A673 (cell line): ENCODE measurements at regions of chr19 and their contacts with region 1.

Region 1: GRCh38 chr19:5445071-5446062 is 9.8 kb upstream of the ZNRF4 start:
- DNase-seq: peak; percentile 51
- H3K4me3 ChIP-seq: no peak overlapping the region
- H3K27ac ChIP-seq: no peak overlapping the region
- H3K4me1 ChIP-seq: no peaks in the 10 kb centered on the region
- H3K27me3 ChIP-seq: no peaks in the 10 kb centered on the region
- CTCF ChIP-seq: no peak

Region 2: GRCh38 chr19:5425260-5425659 is 20.1 kb before region 1 on chr19:
- CTCF ChIA-PET with region 1: interaction called, 11 read pairs
- POLR2A ChIA-PET with region 1: no interaction called
- intact Hi-C with region 1: no loop called
- DNase-seq: no peak
- H3K4me3 ChIP-seq: no peak overlapping the region
- H3K27ac ChIP-seq: no peak overlapping the region
- H3K4me1 ChIP-seq: no peaks in the 10 kb centered on the region
- H3K27me3 ChIP-seq: no peaks in the 10 kb centered on the region
- CTCF ChIP-seq: no peak

Region 3: GRCh38 chr19:5492635-5493409 is 47.5 kb after region 1 on chr19:
- CTCF ChIA-PET with region 1: no interaction called
- POLR2A ChIA-PET with region 1: no interaction called
- intact Hi-C with region 1: no loop called
- DNase-seq: no peak
- H3K4me3 ChIP-seq: no peak overlapping the region
- H3K27ac ChIP-seq: no peak overlapping the region
- H3K4me1 ChIP-seq: no peaks in the 10 kb centered on the region
- H3K27me3 ChIP-seq: no peaks in the 10 kb centered on the region
- CTCF ChIP-seq: no peak

Region 4: DNA sequence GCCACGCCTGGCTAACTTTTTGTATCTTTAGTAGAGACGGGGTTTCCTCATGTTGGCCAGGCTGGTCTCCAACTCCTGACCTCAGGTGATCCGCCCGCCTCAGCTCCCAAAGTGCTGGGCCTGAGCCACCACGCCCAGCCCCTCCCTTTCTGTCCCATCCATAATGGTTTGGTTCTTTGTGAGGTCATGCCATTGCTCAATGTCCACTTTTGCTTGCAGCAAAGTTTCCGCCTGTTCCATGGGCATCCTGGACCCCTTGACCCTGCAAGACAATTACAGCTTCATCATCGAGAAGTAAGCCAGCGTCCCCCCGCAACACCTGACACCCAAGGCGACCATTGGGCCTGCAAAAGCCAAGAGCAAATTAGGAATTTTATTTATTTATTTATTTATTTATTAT is 322.6 kb after region 1 on chr19:
- CTCF ChIA-PET with region 1: no interaction called
- POLR2A ChIA-PET with region 1: no interaction called
- intact Hi-C with region 1: no loop called
- DNase-seq: no peak
- H3K4me3 ChIP-seq: no peak overlapping the region
- H3K27ac ChIP-seq: no peak overlapping the region
- H3K4me1 ChIP-seq: no peaks in the 10 kb centered on the region
- H3K27me3 ChIP-seq: no peaks in the 10 kb centered on the region
- CTCF ChIP-seq: no peak